ENCODE measurements at regions of chr16 and their contacts with region 1.

Region 1: GRCh38 chr16:6195966-6196365 is 1098.4 kb upstream of the EEF2KMT start:
- DNase-seq: no peak

Region 2: GRCh38 chr16:5801396-5801795 is 394.6 kb before region 1 on chr16:
- intact Hi-C with region 1: loop called in 1 of 2 experiments (anchors 5 kb)
- DNase-seq: no peak

Measured in posterior vena cava (tissue), 2 donors.